PC-9 (cell line): ENCODE measurements at regions of chr11 and their contacts with region 1.

Region 1: DNA sequence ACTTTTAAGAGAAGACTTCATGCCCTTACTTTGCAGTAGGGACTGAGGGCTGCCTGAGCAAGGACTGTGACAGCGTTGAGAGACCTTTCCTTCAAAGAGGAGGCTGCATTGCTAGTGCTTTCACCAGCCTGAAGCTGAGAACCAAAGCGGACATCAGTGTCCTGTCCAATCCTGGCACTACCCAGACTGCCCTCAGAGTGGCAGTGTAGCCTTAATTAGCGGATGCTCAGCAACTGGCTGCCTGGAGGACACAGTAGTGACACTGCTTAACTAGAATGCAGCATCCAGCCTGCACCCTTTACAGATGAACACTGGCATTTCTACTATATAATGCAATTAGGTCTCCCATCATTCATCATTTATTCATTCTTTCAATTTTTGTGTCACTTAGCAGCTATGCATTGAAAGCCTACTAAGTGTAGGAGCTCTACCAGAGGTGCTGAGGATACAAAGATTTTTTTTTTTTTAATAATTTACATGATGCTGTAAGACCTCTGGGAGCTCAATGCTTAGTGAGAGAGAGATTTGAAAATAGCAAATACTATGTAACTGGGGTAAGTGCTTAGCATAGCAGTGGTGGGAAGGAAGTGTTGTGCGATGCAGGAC is 36.9 kb upstream of the SLC36A4 start:
- DNase-seq: peak; percentile 70 to 74
- H3K4me3 ChIP-seq: no peak overlapping the region
- H3K27ac ChIP-seq: no peak overlapping the region
- H3K4me1 ChIP-seq: no peaks in the 10 kb centered on the region
- H3K27me3 ChIP-seq: no peaks in the 10 kb centered on the region
- CTCF ChIP-seq: peak; percentile 96

Region 2: GRCh38 chr11:93652161-93652597 is 417.5 kb after region 1 on chr11:
- CTCF ChIA-PET with region 1: interaction called, 3 read pairs
- POLR2A ChIA-PET with region 1: no interaction called
- intact Hi-C with region 1: loop called (anchors 1 kb)
- DNase-seq: peak; percentile 22 to 53
- H3K4me3 ChIP-seq: no peak overlapping the region
- H3K27ac ChIP-seq: no peak overlapping the region
- H3K4me1 ChIP-seq: no peaks in the 10 kb centered on the region
- H3K27me3 ChIP-seq: peaks cover 6% of the 10 kb centered on the region; the same call in 1 of the 2 replicates
- CTCF ChIP-seq: peak; percentile 94